Activated T-helper 2 cell treated with anti-CD3 and anti-CD28 coated beads, Interferon-gamma antibody, Interleukin-2, Interleukin-4, amounts not matched to agents 10 μg/mL and 5 μg/mL and 100 μg/mL, durations not matched to agents 14 hours and 24 hours and 36 hours (primary cell): ENCODE measurements at regions of chr10 and their contacts with region 1.

Region 1: GRCh38 chr10:31745612-31746376 is 182.8 kb downstream of the ARHGAP12 start:
- DNase-seq: peak; percentile 27
- H3K4me3 Mint-ChIP-seq: no peak overlapping the region
- H3K27ac Mint-ChIP-seq: peak overlapping the region; percentile 67
- H3K4me1 Mint-ChIP-seq: peaks cover 23% of the 10 kb centered on the region
- H3K27me3 Mint-ChIP-seq: no peaks in the 10 kb centered on the region

Region 2: GRCh38 chr10:31687663-31688482 is 57.9 kb before region 1 on chr10:
- intact Hi-C with region 1: loop called (anchors 5 kb)
- DNase-seq: no peak
- H3K4me3 Mint-ChIP-seq: no peak overlapping the region
- H3K27ac Mint-ChIP-seq: no peak overlapping the region
- H3K4me1 Mint-ChIP-seq: no peaks in the 10 kb centered on the region
- H3K27me3 Mint-ChIP-seq: no peaks in the 10 kb centered on the region

Region 3: DNA sequence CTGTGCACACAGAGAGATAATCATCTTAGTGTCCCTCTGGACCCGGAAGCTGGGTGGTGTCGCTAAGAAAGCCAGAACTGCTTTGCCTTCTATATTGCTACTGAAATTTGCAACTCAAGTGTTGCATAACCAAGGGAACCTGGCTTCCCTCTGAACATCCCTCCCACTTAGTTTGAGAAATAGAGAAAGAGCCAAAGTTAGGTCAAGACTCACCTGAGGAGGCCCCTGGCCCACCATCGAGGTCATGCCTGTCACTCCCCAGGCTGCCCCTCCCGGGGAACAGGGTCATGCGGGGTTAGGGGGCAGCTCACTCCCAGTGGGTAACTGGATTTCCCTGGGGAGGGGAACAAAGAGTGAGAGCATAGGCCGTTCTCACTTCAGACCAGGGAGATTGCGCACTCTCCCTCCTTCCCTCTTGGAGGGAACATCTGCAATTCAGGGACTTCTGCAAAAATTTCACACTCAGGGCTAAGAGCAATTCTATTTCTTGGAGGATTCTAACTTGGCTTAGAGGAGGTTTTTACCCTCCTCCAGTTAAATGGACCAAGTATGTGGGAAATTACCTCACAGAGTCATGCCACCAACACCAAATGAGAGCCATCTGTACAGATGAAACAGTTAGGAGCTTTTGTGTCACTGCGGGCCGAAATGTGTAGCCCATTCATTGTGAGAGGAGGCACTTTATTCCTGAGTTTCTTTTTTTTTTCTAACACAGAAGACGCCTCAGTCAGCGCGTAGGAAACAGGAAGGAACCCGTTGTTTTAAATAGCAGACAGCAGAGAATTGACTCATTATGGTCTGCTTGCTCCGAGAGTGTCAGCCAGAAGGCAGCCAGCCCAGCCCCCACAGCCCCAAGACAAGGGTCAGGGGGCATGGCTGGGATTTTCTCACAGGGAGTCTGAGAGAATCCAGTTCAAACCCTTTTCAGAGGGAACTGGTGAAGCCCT is 38.4 kb before region 1 on chr10:
- intact Hi-C with region 1: loop called (anchors 1 kb)
- DNase-seq: peak; percentile 38
- H3K4me3 Mint-ChIP-seq: peak overlapping the region; percentile 33
- H3K27ac Mint-ChIP-seq: peak overlapping the region; percentile 88
- H3K4me1 Mint-ChIP-seq: peaks cover 26% of the 10 kb centered on the region
- H3K27me3 Mint-ChIP-seq: no peaks in the 10 kb centered on the region

Region 4: GRCh38 chr10:31830887-31831286 is 85.1 kb after region 1 on chr10:
- intact Hi-C with region 1: no loop called
- DNase-seq: no peak
- H3K4me3 Mint-ChIP-seq: no peak overlapping the region
- H3K27ac Mint-ChIP-seq: no peak overlapping the region
- H3K4me1 Mint-ChIP-seq: no peaks in the 10 kb centered on the region
- H3K27me3 Mint-ChIP-seq: no peaks in the 10 kb centered on the region

Region 5: GRCh38 chr10:31847515-31847914 is 101.7 kb after region 1 on chr10:
- intact Hi-C with region 1: no loop called
- DNase-seq: no peak
- H3K4me3 Mint-ChIP-seq: no peak overlapping the region
- H3K27ac Mint-ChIP-seq: no peak overlapping the region
- H3K4me1 Mint-ChIP-seq: peaks cover 6% of the 10 kb centered on the region
- H3K27me3 Mint-ChIP-seq: peaks cover 6% of the 10 kb centered on the region

Region 6: DNA sequence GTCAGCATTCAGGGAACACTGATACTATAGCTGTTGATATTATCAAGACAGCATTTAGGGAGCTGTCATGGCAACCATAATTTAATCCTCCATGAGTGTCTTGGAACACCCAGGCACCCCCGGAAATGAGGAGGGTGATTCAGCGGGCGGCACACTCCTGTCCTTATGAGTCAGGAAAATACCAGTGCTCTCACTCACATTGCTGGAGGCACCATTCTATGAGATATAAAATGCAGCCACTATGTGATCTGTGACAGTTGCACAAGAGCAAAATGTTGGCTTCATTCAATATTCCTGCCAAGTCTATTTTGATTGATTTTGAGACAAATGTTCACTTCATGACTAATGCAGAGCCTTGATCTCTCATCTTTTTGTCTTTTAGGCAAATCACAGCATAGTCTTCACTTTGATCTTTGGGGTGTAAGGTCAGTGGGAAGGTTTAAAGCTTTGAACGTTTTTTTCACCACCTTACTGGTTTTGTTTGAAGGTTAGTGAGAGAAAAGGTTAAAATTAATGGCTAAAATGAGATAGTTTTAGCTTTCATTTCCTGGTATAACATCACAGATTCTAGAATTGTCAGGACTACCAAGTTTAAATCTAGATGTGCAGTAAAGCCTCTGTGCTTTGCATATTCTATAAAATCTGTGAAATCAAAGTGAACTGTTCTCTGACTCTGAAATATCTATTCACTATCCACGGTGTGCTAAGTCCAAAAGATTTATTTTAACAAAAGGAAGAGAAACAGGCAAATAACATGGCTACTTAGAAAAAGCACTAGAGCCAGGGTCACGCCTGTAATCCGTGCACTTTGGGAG is 195.3 kb after region 1 on chr10:
- intact Hi-C with region 1: no loop called
- DNase-seq: no peak
- H3K4me3 Mint-ChIP-seq: no peak overlapping the region
- H3K27ac Mint-ChIP-seq: no peak overlapping the region
- H3K4me1 Mint-ChIP-seq: no peaks in the 10 kb centered on the region
- H3K27me3 Mint-ChIP-seq: peaks cover 8% of the 10 kb centered on the region